ENCODE measurements at regions of chr4 and their contacts with region 1.

Region 1: DNA sequence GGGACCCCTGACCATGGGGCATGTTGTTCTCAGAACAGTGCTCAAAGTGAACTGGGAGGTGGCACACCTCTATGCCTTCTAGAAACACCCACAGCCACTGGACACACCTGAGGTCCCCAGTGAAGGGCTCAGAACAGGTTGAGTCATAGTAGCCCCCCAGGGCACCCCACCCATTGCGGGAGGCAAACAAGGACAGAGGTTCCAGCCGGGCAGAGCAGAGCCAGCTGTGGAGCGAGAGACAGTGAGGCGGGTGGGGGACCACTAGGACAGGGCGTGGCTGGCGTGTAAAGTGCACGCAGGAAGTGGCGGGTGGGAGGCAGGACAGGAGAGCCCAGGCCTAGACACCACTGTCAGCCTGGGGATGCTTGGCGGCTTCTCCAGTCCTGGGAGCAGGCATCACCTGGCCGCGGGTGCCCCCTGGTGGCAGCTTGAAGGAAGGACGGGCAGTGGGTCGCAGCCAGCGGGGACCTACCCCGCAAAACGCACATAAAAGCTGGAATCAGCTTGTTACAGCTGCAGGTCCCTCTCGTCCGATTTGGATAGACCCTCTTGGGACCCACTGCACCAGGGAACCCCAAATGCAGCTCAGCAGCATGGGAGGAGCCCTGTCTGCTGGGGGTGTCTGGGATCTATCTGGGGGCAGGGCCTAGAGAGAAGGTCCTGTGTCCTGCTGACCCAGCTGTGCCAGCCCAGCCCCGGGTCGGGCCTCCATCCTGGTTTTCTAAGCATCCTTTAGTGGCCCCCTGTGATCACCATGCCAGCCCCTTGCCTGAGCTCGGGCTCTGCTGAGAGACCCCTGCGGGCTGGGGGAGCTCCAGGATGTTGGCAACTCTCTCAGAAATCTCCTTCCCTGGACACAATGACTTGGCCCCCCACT is 57.6 kb downstream of the WFS1 start:
- DNase-seq: peak; percentile 38 to 51 (median 39)
- H3K4me3 ChIP-seq: no peak overlapping the region
- H3K4me3 Mint-ChIP-seq: no peak overlapping the region
- H3K27ac ChIP-seq: no peak overlapping the region
- H3K27ac Mint-ChIP-seq: no peak overlapping the region
- H3K4me1 ChIP-seq: no peaks in the 10 kb centered on the region
- H3K4me1 Mint-ChIP-seq: no peaks in the 10 kb centered on the region
- H3K27me3 ChIP-seq: peaks cover 0 to 16% of the 10 kb centered on the region in 2 donors
- H3K27me3 Mint-ChIP-seq: peaks cover 31 to 44% (median 32%) of the 10 kb centered on the region in 3 donors
- CTCF ChIP-seq: peak; percentile 94

Region 2: GRCh38 chr4:5998333-5998936 is 328.8 kb before region 1 on chr4:
- intact Hi-C with region 1: loop called in 1 of 2 experiments (anchors 5 kb)
- DNase-seq: peak in 2 of 3 donors; percentile 3 to 15
- H3K4me3 ChIP-seq: no peak overlapping the region
- H3K4me3 Mint-ChIP-seq: no peak overlapping the region
- H3K27ac ChIP-seq: no peak overlapping the region
- H3K27ac Mint-ChIP-seq: no peak overlapping the region
- H3K4me1 ChIP-seq: no peaks in the 10 kb centered on the region
- H3K4me1 Mint-ChIP-seq: peaks cover 2% of the 10 kb centered on the region
- H3K27me3 ChIP-seq: no peaks in the 10 kb centered on the region
- H3K27me3 Mint-ChIP-seq: peaks cover 0 to 6% (median 2%) of the 10 kb centered on the region in 3 donors
- CTCF ChIP-seq: peak; percentile 84

Region 3: DNA sequence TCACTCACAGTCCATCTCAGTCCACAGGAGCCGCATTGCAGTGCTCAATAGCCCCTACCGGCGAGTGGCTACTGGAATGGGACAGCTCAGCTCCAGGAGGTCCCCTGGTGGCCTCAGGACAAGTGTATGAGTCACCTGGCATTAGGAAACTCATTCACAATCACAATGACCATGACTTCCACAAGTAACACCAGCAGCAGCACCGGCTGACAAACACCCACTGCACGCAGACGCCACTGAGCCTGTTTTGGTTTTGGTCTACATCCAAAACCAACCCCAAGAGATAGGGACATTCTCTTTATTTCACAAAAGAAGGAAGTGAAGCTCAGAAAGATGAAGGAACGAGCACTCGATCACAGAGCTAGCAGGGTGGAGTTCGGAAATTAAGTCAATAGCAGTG is 135.0 kb before region 1 on chr4:
- intact Hi-C with region 1: no loop called
- DNase-seq: no peak
- H3K4me3 ChIP-seq: no peak overlapping the region
- H3K4me3 Mint-ChIP-seq: no peak overlapping the region
- H3K27ac ChIP-seq: no peak overlapping the region
- H3K27ac Mint-ChIP-seq: no peak overlapping the region
- H3K4me1 ChIP-seq: no peaks in the 10 kb centered on the region
- H3K4me1 Mint-ChIP-seq: no peaks in the 10 kb centered on the region
- H3K27me3 ChIP-seq: peaks cover 0 to under 1% of the 10 kb centered on the region in 2 donors
- H3K27me3 Mint-ChIP-seq: peaks cover 9 to 18% (median 13%) of the 10 kb centered on the region in 3 donors
- CTCF ChIP-seq: no peak

Region 4: GRCh38 chr4:6250235-6250983 is 76.9 kb before region 1 on chr4:
- intact Hi-C with region 1: loop called (anchors 1 to 5 kb)
- DNase-seq: peak; percentile 21 to 50 (median 37)
- H3K4me3 ChIP-seq: no peak overlapping the region
- H3K4me3 Mint-ChIP-seq: peak overlapping the region in 1 of 2 donors; percentile 36
- H3K27ac ChIP-seq: no peak overlapping the region
- H3K27ac Mint-ChIP-seq: no peak overlapping the region
- H3K4me1 ChIP-seq: no peaks in the 10 kb centered on the region
- H3K4me1 Mint-ChIP-seq: no peaks in the 10 kb centered on the region
- H3K27me3 ChIP-seq: peaks cover 2 to 40% of the 10 kb centered on the region in 2 donors
- H3K27me3 Mint-ChIP-seq: peaks cover 29 to 37% (median 33%) of the 10 kb centered on the region in 3 donors
- CTCF ChIP-seq: peak; percentile 79